ENCODE measurements at regions of chr3 and their contacts with region 1.

Region 1: GRCh38 chr3:195106418-195106906 is 164.5 kb downstream of the XXYLT1 start:
- DNase-seq: peak; percentile 83
- H3K4me3 ChIP-seq: peak overlapping the region; percentile 65
- H3K27ac ChIP-seq: no peak overlapping the region
- H3K4me1 ChIP-seq: peaks cover 15% of the 10 kb centered on the region
- H3K27me3 ChIP-seq: no peaks in the 10 kb centered on the region

Region 2: DNA sequence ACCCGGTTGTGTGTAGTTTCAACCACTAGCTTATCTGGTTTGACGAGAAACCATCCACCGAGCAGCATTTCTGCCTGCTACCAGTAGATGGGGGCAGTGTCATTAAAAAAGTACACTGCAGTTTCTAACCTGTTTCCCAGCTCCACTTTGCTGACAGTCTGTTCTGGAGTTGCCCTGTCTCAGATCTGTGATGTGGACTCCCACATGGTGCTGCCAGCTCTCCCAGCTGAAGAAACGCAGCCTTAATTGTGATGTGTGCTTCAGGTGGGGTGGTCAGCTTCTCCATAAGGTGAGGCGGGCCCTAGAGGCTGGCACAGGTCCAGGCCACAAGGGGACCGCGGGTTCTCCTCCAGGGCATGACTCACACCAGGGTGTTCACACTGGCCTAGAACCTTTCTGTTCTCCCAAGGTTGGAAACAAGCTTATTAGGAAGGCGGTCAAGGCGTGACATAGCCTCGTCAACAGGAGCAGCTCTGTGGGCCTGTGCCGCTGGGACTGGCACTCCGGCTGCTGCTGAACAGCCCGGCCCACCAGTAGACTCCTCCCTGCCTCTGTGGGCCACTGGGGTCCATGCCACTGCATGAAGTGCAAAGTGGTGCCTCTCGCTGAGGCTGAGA is 423.7 kb before region 1 on chr3:
- in situ Hi-C with region 1: loop called (anchors 10 kb)
- DNase-seq: peak; percentile 91
- H3K4me3 ChIP-seq: 0 out of 2 replicates have a peak overlapping the region, but pooled peaks have one; percentile 6
- H3K27ac ChIP-seq: peak overlapping the region; percentile 25
- H3K4me1 ChIP-seq: peaks cover 12% of the 10 kb centered on the region
- H3K27me3 ChIP-seq: no peaks in the 10 kb centered on the region

Region 3: GRCh38 chr3:195442573-195443390 is 336.3 kb after region 1 on chr3 and contains the start of gene ACAP2:
- in situ Hi-C with region 1: no loop called
- DNase-seq: peak; percentile 100
- H3K4me3 ChIP-seq: peak within 1 kb of the TSS; percentile 98
- H3K27ac ChIP-seq: peak within 1 kb of the TSS; percentile 80
- H3K4me1 ChIP-seq: peaks cover 27% of the 10 kb centered on the region
- H3K27me3 ChIP-seq: no peaks in the 10 kb centered on the region
- total RNA-seq, gene ACAP2: 47.8 and 50.5 TPM in 2 replicates

Region 4: GRCh38 chr3:195522254-195523023 is 416.0 kb after region 1 on chr3:
- in situ Hi-C with region 1: loop called (anchors 25 kb)
- DNase-seq: peak; percentile 67
- H3K4me3 ChIP-seq: no peak overlapping the region
- H3K27ac ChIP-seq: no peak overlapping the region
- H3K4me1 ChIP-seq: no peaks in the 10 kb centered on the region
- H3K27me3 ChIP-seq: no peaks in the 10 kb centered on the region

Measured in GM23248 (cell line).